Heart left ventricle (tissue), 16 donors: ENCODE measurements at regions of chr13 and their contacts with region 1.

Region 1: DNA sequence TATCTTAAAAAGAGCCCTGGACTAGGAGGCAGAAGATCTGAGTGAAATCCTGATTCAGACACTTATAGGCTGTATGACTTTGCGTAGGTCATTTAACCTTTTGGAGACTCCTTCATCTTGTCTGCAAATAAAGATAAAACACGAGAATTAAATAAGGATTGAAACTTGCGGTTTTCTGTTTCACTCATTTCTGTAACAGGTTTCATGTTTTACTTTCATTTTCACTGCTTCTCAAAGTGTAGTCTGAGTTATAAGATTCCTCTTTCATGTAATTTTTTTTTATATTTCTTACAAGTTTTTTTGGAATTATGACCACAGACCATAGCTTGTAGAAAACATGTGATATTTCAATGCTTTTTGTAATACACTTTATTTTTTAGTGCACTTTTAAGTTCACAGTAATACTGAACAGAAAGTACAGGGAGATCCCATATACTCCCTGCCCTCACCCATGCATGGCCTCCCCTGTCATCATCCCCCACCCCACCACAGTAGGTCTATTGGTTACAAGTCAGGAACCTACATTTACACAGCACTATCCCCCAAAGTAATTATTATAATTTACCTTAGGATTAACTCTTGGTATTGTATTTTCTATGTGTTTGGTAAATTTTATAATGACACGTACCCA is 174.6 kb downstream of the ITGBL1 start:
- DNase-seq: no peak
- ATAC-seq: peak in 2 of 4 donors; percentile 42 to 59
- H3K4me3 ChIP-seq: peak overlapping the region in 9 of 12 donors; percentile 9 to 54 (median 30)
- H3K27ac ChIP-seq: peak overlapping the region in 4 of 12 donors; percentile 1 to 77 (median 30)
- H3K4me1 ChIP-seq: peaks cover 0 to 26% (median 0%) of the 10 kb centered on the region in 12 donors
- H3K27me3 ChIP-seq: no peaks in the 10 kb centered on the region
- CTCF ChIP-seq: no peak
- POLR2A ChIP-seq: no peak

Region 2: GRCh38 chr13:101535192-101535746 is 91.8 kb before region 1 on chr13:
- intact Hi-C with region 1: no loop called
- DNase-seq: no peak
- ATAC-seq: no peak
- H3K4me3 ChIP-seq: no peak overlapping the region
- H3K27ac ChIP-seq: no peak overlapping the region
- H3K4me1 ChIP-seq: no peaks in the 10 kb centered on the region
- H3K27me3 ChIP-seq: no peaks in the 10 kb centered on the region
- CTCF ChIP-seq: no peak
- POLR2A ChIP-seq: no peak

Region 3: DNA sequence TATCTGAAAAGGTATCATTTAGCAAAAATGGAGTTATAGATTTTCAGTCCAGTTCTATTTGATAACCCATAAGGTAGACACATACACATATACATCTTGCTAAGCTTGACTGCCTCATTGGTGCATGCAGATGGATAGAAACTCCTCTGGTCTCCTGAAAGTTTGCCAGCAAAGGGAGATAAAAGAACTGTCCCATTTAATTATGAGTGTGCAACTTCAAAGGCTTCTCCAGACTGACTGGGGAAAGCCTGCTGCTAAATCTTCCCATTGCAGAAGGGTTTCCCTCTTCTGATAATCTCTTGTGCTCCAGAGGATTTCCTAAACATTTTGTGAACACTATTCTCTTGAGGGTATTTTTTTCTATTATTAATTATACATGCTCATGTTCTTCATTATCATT is 42.7 kb before region 1 on chr13:
- intact Hi-C with region 1: no loop called
- DNase-seq: no peak
- ATAC-seq: no peak
- H3K4me3 ChIP-seq: no peak overlapping the region
- H3K27ac ChIP-seq: no peak overlapping the region
- H3K4me1 ChIP-seq: no peaks in the 10 kb centered on the region
- H3K27me3 ChIP-seq: no peaks in the 10 kb centered on the region
- CTCF ChIP-seq: no peak
- POLR2A ChIP-seq: no peak

Region 4: DNA sequence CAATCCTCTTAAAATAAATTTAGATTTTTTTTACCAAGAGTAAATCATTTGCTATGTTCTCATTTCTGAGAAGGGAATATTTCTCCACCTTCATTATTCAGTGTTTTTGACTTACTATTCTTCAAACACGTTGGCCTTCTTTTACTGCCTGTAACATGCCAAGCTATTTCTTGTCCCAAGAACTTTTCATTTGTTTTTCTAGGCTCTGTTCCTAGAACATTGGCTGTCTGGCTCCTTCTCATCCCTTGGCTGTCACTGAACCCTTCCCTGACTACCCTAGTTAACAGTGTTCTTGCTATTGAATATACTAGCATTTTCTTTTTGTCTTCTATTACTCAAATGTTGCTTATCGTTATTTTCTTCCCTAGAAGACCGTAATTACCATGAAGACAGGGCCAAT is 73.6 kb after region 1 on chr13:
- intact Hi-C with region 1: loop called in 1 of 10 experiments (anchors 5 kb)
- DNase-seq: no peak
- ATAC-seq: peak; percentile 62 to 88 (median 83)
- H3K4me3 ChIP-seq: no peak overlapping the region
- H3K27ac ChIP-seq: peak overlapping the region in 4 of 12 donors; percentile 4 to 59 (median 44)
- H3K4me1 ChIP-seq: peaks cover 0 to 22% (median 0%) of the 10 kb centered on the region in 12 donors
- H3K27me3 ChIP-seq: no peaks in the 10 kb centered on the region
- CTCF ChIP-seq: no peak
- POLR2A ChIP-seq: no peak